Naive thymus-derived CD4-positive, alpha-beta T cell (primary cell): ENCODE measurements at regions of chr17 and their contacts with region 1.

Region 1: GRCh38 chr17:4554997-4555799 is at the start of gene MYBBP1A:
- DNase-seq: peak; percentile 92 to 98 (median 95)
- ATAC-seq: peak; percentile 96
- H3K4me3 ChIP-seq: peak within 1 kb of the TSS; percentile 87
- H3K4me3 Mint-ChIP-seq: peak within 1 kb of the TSS; percentile 87 to 97 (median 95)
- H3K27ac ChIP-seq: peak within 1 kb of the TSS; percentile 79
- H3K27ac Mint-ChIP-seq: peak within 1 kb of the TSS; percentile 88 to 98 (median 96)
- H3K4me1 ChIP-seq: peaks cover 20% of the 10 kb centered on the region in 2 donors
- H3K4me1 Mint-ChIP-seq: peaks cover 16 to 34% (median 27%) of the 10 kb centered on the region in 7 donors
- H3K27me3 ChIP-seq: no peaks in the 10 kb centered on the region
- H3K27me3 Mint-ChIP-seq: no peaks in the 10 kb centered on the region
- total RNA-seq, gene MYBBP1A: 59.8 to 81.8 (median 77.9) TPM

Region 2: GRCh38 chr17:4263282-4264215 is 291.6 kb before region 1 on chr17 and contains the start of gene ANKFY1:
- CTCF ChIA-PET with region 1: no interaction called
- POLR2A ChIA-PET with region 1: no interaction called
- intact Hi-C with region 1: loop called in 1 of 2 experiments (anchors 1 kb)
- DNase-seq: peak; percentile 95 to 99 (median 97)
- ATAC-seq: peak; percentile 98
- H3K4me3 ChIP-seq: peak within 1 kb of the TSS; percentile 73
- H3K4me3 Mint-ChIP-seq: peak within 1 kb of the TSS; percentile 89 to 99 (median 94)
- H3K27ac ChIP-seq: peak within 1 kb of the TSS; percentile 94
- H3K27ac Mint-ChIP-seq: peak within 1 kb of the TSS; percentile 82 to 98 (median 95)
- H3K4me1 ChIP-seq: peaks cover 16 to 17% of the 10 kb centered on the region in 2 donors
- H3K4me1 Mint-ChIP-seq: peaks cover 27 to 49% (median 41%) of the 10 kb centered on the region in 7 donors
- H3K27me3 ChIP-seq: no peaks in the 10 kb centered on the region
- H3K27me3 Mint-ChIP-seq: no peaks in the 10 kb centered on the region
- total RNA-seq, gene ANKFY1: 52.4 to 84.5 (median 69.7) TPM

Region 3: GRCh38 chr17:4480929-4481898 is 74.0 kb before region 1 on chr17:
- CTCF ChIA-PET with region 1: no interaction called
- POLR2A ChIA-PET with region 1: interaction called, 5 read pairs
- intact Hi-C with region 1: loop called in 1 of 2 experiments (anchors 1 kb)
- DNase-seq: peak in 6 of 9 donors; percentile 18 to 50 (median 30)
- ATAC-seq: peak; percentile 74
- H3K4me3 ChIP-seq: peak overlapping the region; percentile 51
- H3K4me3 Mint-ChIP-seq: peak overlapping the region; percentile 63 to 89 (median 84)
- H3K27ac ChIP-seq: peak overlapping the region; percentile 53
- H3K27ac Mint-ChIP-seq: peak overlapping the region; percentile 88 to 97 (median 92)
- H3K4me1 ChIP-seq: peaks cover 28% of the 10 kb centered on the region in 2 donors
- H3K4me1 Mint-ChIP-seq: peaks cover 27 to 59% (median 48%) of the 10 kb centered on the region in 7 donors
- H3K27me3 ChIP-seq: no peaks in the 10 kb centered on the region
- H3K27me3 Mint-ChIP-seq: no peaks in the 10 kb centered on the region

Region 4: DNA sequence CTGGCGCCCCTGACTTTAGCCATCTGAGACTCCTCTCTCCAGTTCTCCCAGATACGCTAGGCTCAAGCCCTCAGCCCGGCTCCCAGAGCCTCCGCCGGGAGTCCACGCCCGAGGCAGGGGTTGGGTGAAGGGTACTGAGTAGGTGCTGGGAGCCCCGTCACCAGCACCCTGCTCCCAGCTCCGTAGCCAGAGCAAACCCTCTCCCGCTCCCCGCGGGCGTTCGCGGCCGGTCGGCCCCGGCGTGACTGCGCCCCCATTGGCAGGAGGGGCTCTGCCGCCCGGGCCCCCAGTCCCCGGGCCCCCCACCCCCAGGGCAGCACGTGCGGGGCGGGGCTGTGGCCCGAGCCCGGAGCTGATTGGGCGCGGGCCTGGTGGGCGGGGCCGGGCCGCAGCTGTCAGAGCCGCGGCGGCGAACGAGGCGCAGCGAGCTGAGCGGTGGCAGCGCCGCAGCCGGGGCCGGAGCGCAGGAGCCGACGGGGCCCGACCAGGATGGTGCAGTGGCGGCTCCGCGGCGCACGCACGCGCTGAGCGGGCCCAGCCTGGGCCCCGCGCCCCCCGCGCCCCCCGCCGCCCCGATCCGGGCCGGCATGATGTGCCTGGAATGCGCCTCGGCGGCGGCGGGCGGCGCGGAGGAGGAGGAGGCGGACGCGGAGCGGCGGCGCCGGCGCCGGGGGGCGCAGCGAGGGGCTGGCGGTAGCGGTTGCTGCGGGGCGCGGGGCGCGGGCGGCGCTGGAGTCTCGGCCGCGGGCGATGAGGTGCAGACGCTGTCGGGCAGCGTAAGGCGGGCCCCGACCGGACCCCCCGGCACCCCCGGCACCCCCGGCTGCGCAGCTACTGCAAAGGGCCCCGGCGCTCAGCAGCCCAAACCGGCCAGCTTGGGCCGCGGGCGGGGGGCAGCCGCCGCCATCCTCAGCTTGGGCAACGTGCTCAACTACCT is 56.5 kb before region 1 on chr17 and contains the start of gene SPNS2:
- CTCF ChIA-PET with region 1: interaction called, 4 read pairs
- POLR2A ChIA-PET with region 1: no interaction called
- intact Hi-C with region 1: loop called in 1 of 2 experiments (anchors 1 kb)
- DNase-seq: peak; percentile 46 to 74 (median 66)
- ATAC-seq: peak; percentile 96
- H3K4me3 ChIP-seq: peak within 1 kb of the TSS; percentile 48
- H3K4me3 Mint-ChIP-seq: peak within 1 kb of the TSS; percentile 77 to 92 (median 84)
- H3K27ac ChIP-seq: no peak within 1 kb of the TSS
- H3K27ac Mint-ChIP-seq: no peak within 1 kb of the TSS
- H3K4me1 ChIP-seq: peaks cover 15 to 17% of the 10 kb centered on the region in 2 donors
- H3K4me1 Mint-ChIP-seq: peaks cover 13 to 26% (median 23%) of the 10 kb centered on the region in 7 donors
- H3K27me3 ChIP-seq: peaks cover 0 to 14% of the 10 kb centered on the region in 2 donors
- H3K27me3 Mint-ChIP-seq: peaks cover 15 to 52% (median 26%) of the 10 kb centered on the region in 5 donors
- total RNA-seq, gene SPNS2: 0.19 to 0.56 (median 0.50) TPM in 4 of 5 experiments, not detected in the other

Region 5: GRCh38 chr17:4565209-4566141 is 10.3 kb after region 1 on chr17:
- CTCF ChIA-PET with region 1: interaction called, 4 read pairs
- POLR2A ChIA-PET with region 1: interaction called, 8 read pairs
- intact Hi-C with region 1: loop called (anchors 1 kb)
- DNase-seq: peak in 8 of 9 donors; percentile 29 to 60 (median 50)
- ATAC-seq: peak; percentile 90
- H3K4me3 ChIP-seq: no peak overlapping the region
- H3K4me3 Mint-ChIP-seq: peak overlapping the region in 9 of 10 donors; percentile 44 to 77 (median 70)
- H3K27ac ChIP-seq: no peak overlapping the region
- H3K27ac Mint-ChIP-seq: peak overlapping the region in 3 of 9 donors; percentile 15 to 41 (median 21)
- H3K4me1 ChIP-seq: peaks cover 7 to 11% of the 10 kb centered on the region in 2 donors
- H3K4me1 Mint-ChIP-seq: peaks cover 15 to 40% (median 33%) of the 10 kb centered on the region in 7 donors
- H3K27me3 ChIP-seq: no peaks in the 10 kb centered on the region
- H3K27me3 Mint-ChIP-seq: peaks cover 0 to 17% (median 0%) of the 10 kb centered on the region in 5 donors

Region 6: DNA sequence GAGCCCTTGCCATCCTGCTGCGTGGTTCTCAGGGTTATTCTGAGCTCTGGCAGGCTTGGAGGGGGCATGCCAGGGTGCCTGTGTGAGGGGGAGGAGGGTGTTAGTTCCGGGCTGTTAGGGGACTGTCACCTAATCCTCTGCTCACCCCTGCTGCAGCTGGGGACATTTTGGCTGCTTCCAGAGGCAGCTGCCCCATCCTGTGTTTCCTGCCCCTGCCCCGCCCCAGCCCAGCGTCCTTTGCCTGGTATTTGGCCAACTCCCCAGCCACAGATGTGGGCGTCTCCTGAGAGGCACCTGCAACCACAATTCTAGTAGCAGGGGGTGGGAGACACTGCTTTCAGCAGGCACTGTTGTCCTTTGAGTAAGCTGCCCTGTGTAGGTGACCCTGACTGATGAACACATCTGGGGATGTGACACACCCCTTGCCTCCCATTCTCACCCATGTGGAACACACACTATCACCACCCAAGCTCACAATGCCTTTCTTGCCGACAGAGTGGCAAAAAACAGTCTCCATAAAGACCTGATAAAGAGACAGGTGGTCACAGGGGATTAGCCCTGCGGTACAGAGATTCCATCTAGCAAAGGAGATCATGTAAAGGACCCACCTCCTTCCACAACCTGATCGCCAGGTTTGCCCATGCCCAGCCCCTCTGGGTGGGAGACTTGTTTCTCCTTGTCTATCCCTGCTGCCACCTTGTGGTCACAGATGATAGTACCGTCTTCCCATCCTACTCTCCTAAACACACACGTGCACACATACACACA is 348.0 kb after region 1 on chr17 and contains the start of gene CHRNE:
- CTCF ChIA-PET with region 1: no interaction called
- POLR2A ChIA-PET with region 1: no interaction called
- intact Hi-C with region 1: loop called in 1 of 2 experiments (anchors 5 kb)
- DNase-seq: peak in 8 of 9 donors; percentile 63 to 80 (median 76)
- ATAC-seq: peak; percentile 41
- H3K4me3 ChIP-seq: peak within 1 kb of the TSS; percentile 29
- H3K4me3 Mint-ChIP-seq: peak within 1 kb of the TSS; percentile 37 to 84 (median 72)
- H3K27ac ChIP-seq: no peak within 1 kb of the TSS
- H3K27ac Mint-ChIP-seq: peak within 1 kb of the TSS; percentile 57 to 98 (median 71)
- H3K4me1 ChIP-seq: peaks cover 29 to 40% of the 10 kb centered on the region in 2 donors
- H3K4me1 Mint-ChIP-seq: peaks cover 14 to 46% (median 37%) of the 10 kb centered on the region in 7 donors
- H3K27me3 ChIP-seq: no peaks in the 10 kb centered on the region
- H3K27me3 Mint-ChIP-seq: peaks cover 0 to 20% (median 0%) of the 10 kb centered on the region in 5 donors
- total RNA-seq, gene CHRNE: 0.34 to 6.5 (median 1.0) TPM

Region 7: DNA sequence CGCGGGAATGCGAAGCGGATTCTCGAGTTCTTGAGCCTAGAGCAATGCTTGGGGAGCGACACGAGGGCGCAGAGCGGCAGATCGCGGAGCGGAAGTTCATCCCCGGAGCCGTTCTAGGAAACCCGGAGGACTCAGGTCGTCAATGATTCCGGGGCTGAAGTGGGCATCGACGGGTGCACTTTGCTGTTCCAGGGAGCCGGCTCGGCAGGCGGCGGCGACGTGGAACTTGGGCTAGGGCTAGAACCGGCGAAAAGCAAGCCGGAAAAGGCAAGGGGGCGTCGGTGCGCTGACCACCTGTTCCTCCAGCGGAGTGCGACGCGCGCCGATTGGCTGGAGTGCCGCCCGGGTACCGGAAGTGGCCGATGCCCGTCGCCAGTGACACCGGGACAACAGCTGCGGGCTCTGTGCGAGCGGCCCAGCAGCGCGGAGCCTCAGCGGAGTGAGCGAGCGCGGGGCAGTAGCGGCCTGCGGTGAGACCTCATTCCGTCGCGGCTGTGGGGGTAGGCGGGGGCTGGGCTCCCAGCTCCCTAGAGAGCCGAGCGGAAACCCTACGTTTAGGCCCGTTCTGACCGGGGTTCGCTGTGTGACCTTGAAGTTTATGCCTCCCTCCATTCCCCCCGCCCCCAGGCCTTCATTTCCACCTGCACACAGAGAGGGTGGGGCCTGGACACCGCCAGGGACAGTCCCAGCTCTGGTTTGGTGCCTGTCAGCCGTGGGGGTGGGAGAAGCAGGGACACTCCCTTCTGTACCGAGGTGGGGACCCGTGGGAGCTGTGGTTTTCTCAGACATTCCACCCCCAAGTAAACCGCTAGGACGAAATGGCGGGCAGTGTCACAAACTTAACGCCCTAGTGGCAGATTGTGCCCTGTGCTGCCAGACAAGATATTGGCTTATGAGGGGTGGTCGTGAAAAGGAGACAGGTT is 523.2 kb after region 1 on chr17 and contains the start of gene ZFP3:
- CTCF ChIA-PET with region 1: no interaction called
- POLR2A ChIA-PET with region 1: no interaction called
- intact Hi-C with region 1: loop called in 1 of 2 experiments (anchors 10 kb)
- DNase-seq: peak; percentile 47 to 77 (median 67)
- ATAC-seq: peak; percentile 85
- H3K4me3 ChIP-seq: peak within 1 kb of the TSS; percentile 81
- H3K4me3 Mint-ChIP-seq: peak within 1 kb of the TSS; percentile 89 to 98 (median 95)
- H3K27ac ChIP-seq: peak within 1 kb of the TSS; percentile 81
- H3K27ac Mint-ChIP-seq: peak within 1 kb of the TSS; percentile 87 to 96 (median 94)
- H3K4me1 ChIP-seq: peaks cover 13 to 15% of the 10 kb centered on the region in 2 donors
- H3K4me1 Mint-ChIP-seq: peaks cover 12 to 41% (median 35%) of the 10 kb centered on the region in 7 donors
- H3K27me3 ChIP-seq: no peaks in the 10 kb centered on the region
- H3K27me3 Mint-ChIP-seq: peaks cover 0 to 2% (median 0%) of the 10 kb centered on the region in 5 donors
- total RNA-seq, gene ZFP3: 3.5 to 14.8 (median 5.7) TPM

Region 8: GRCh38 chr17:5135726-5136579 is 580.8 kb after region 1 on chr17:
- CTCF ChIA-PET with region 1: no interaction called
- POLR2A ChIA-PET with region 1: no interaction called
- intact Hi-C with region 1: no loop called
- DNase-seq: no peak
- ATAC-seq: no peak
- H3K4me3 ChIP-seq: no peak overlapping the region
- H3K4me3 Mint-ChIP-seq: no peak overlapping the region
- H3K27ac ChIP-seq: no peak overlapping the region
- H3K27ac Mint-ChIP-seq: no peak overlapping the region
- H3K4me1 ChIP-seq: no peaks in the 10 kb centered on the region
- H3K4me1 Mint-ChIP-seq: no peaks in the 10 kb centered on the region
- H3K27me3 ChIP-seq: no peaks in the 10 kb centered on the region
- H3K27me3 Mint-ChIP-seq: peaks cover 0 to 2% (median 0%) of the 10 kb centered on the region in 5 donors